ENCODE measurements at regions of chr14 and their contacts with region 1.

Region 1: DNA sequence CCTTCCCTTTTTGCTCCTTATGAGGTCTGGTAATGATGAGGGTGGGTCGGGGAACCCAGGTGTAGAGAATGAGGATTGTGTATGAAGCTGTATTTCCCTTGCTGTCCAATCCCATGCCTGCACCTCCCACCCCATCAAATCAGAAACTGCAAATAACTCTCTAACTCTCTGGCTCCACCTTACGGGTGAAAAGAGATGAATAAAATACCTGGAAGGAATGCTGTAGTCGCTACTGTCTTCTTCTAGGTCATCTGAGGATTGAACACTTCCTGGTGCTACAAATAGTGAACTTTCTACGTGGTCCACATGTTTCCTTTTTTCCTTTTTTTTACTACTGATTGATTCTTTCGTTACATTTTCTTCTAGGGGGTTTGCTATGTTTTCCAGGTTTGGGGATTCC is 39.0 kb upstream of the DICER1 start:
- DNase-seq: no peak
- H3K4me3 ChIP-seq: no peak overlapping the region
- H3K27ac ChIP-seq: peak overlapping the region in 3 of 59 donors; percentile 6 to 24 (median 23)
- H3K27me3 ChIP-seq: no peaks in the 10 kb centered on the region
- CTCF ChIP-seq: peak in 17 of 56 donors; percentile 8 to 36 (median 20)

Region 2: DNA sequence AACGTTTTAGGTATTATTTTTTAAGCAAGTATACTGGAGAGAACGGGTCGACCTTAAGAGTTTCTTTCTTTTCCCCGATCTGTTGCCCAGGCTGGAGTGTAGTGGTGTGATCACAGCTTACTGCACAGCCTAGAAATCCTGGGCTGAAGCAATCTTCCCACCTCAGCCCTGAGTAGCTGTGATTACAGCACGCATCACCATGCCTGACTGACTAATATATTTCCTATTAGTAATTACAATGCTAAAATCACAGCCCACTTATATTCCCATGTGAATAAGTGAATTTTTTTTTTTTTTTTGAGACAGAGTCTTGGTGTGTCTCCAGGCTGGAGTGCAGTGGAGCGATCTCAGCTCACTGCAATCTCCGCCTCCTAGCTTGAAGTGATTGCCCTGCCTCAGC is 89.3 kb before region 1 on chr14:
- intact Hi-C with region 1: loop called in 1 of 2 experiments (anchors 5 kb)
- DNase-seq: no peak
- H3K4me3 ChIP-seq: no peak overlapping the region
- H3K27ac ChIP-seq: no peak overlapping the region
- H3K27me3 ChIP-seq: no peaks in the 10 kb centered on the region
- CTCF ChIP-seq: no peak

Region 3: DNA sequence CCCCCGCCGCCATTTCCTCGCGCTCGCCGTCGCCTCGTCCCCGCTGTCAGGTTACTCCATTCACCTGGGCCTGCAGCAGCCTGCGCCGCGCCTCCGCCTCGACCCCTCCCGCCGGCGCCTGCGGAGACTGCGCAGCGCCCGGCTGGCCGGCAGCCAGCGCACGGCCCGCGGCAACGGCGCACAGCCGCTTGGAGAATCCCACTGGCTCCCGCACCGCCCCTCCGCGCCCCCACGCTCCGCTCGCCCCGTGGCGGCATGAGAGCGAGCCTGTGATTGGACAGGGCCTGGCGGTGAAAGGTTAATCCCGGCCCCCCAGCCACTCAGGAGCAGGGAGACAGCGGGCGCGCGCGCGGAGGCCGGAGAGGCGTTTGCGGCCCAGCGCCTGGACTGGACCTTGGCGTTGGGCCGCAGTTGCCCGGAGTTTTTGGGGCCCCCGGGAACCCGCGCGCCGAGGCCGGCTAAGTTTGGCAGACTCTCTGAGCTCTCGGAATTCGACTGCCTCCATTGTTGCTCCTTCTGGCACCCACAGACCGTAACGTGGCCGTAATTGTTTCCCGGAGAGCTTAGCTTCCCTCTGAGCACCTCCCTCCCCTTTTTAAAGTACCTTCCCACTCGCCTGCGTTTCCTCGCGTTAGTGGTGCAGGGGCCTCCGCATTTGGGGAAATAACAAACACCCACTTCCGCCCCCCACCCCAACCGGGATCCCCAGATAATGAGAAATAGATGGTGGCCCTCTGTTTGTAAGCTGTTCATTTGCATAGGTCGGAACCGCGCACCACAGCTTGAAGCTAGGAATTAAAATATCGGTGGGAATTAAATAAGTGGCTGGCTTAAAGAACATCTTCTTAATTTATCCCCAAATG is 38.7 kb before region 1 on chr14 and contains the start of gene DICER1:
- intact Hi-C with region 1: no loop called
- DNase-seq: peak; percentile 96 to 99 (median 98)
- H3K4me3 ChIP-seq: peak within 1 kb of the TSS; percentile 63 to 95 (median 88)
- H3K27ac ChIP-seq: peak within 1 kb of the TSS; percentile 81 to 99 (median 95)
- H3K27me3 ChIP-seq: no peaks in the 10 kb centered on the region
- CTCF ChIP-seq: peak in 23 of 56 donors; percentile 1 to 51 (median 18)
- total RNA-seq, gene DICER1: 58.4 to 196 (median 82.9) TPM